PC-9 (cell line): ENCODE measurements at regions of chr2 and their contacts with region 1.

Region 1: DNA sequence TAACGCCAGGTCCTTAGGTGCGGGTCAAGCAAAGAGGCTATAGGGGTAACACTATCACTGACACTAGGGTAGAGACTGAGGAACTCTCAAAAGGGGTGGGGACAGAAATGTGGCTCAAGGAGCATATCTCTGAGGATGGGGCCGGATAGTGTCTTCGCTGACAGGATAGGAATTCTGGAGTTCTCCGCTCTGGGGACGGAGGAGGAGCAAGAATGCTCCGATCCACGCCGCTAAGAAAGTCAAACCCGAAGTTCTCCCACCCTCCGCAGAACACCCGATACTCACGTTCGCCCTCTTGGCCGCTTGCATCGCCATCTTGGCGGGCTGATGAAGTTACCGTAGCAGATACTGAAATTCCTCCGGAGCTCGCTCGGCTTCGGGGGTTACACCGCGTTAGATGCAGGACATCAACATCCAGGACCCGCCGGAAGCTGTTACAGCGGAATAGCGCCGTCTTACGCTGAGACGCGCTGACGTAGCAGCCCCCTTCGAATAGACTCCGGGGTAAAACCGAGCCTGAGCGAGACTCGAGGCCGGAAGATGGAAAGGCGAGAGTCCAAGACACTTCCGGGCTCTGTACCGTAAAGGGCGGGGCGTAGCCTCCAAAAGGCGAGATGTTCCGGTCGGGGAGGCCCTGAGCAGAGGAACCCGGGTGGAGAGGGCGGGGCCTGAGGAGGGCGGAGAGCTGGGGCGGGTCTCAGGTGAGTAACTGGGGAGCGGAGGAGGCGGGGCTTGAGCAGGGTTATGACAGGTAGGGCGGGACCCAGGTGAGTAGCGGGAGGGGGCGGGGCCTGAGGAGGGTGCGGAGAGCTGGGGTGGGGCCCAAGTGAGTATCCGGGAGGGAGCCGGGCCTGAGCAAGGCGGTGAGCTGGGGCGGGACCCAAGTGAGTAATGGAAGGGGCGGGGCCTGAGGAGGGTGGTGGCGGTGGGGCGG is at the start of gene SF3B6:
- DNase-seq: peak; percentile 99 to 100
- H3K4me3 ChIP-seq: peak within 1 kb of the TSS; percentile 89
- H3K27ac ChIP-seq: peak within 1 kb of the TSS; percentile 85
- H3K4me1 ChIP-seq: peaks cover 21% of the 10 kb centered on the region
- H3K27me3 ChIP-seq: no peaks in the 10 kb centered on the region
- CTCF ChIP-seq: no peak
- total RNA-seq, gene SF3B6: 106 and 123 TPM in 2 replicates

Region 2: GRCh38 chr2:23926750-23927571 is 149.2 kb before region 1 on chr2 and contains the start of gene ATAD2B:
- CTCF ChIA-PET with region 1: interaction called, 6 read pairs
- POLR2A ChIA-PET with region 1: interaction called, 9 read pairs
- intact Hi-C with region 1: loop called (anchors 2 kb)
- DNase-seq: peak; percentile 86 to 96
- H3K4me3 ChIP-seq: peak within 1 kb of the TSS; percentile 99
- H3K27ac ChIP-seq: peak within 1 kb of the TSS; percentile 76
- H3K4me1 ChIP-seq: peaks cover 30% of the 10 kb centered on the region
- H3K27me3 ChIP-seq: no peaks in the 10 kb centered on the region
- CTCF ChIP-seq: peak; percentile 79
- total RNA-seq, gene ATAD2B: 12.6 and 12.8 TPM in 2 replicates

Region 3: GRCh38 chr2:24046930-24047702 is 29.1 kb before region 1 on chr2 and contains the start of gene WDCP:
- CTCF ChIA-PET with region 1: interaction called, 5 read pairs
- POLR2A ChIA-PET with region 1: interaction called, 19 read pairs
- intact Hi-C with region 1: loop called (anchors 1 kb)
- DNase-seq: peak; percentile 91 to 99
- H3K4me3 ChIP-seq: peak within 1 kb of the TSS; percentile 73
- H3K27ac ChIP-seq: no peak within 1 kb of the TSS
- H3K4me1 ChIP-seq: peaks cover 17% of the 10 kb centered on the region; the same call in 1 of the 2 replicates
- H3K27me3 ChIP-seq: peaks cover 10% of the 10 kb centered on the region; the same call in 1 of the 2 replicates
- CTCF ChIP-seq: no peak
- total RNA-seq, gene WDCP: 7.9 and 13.5 TPM in 2 replicates

Region 4: DNA sequence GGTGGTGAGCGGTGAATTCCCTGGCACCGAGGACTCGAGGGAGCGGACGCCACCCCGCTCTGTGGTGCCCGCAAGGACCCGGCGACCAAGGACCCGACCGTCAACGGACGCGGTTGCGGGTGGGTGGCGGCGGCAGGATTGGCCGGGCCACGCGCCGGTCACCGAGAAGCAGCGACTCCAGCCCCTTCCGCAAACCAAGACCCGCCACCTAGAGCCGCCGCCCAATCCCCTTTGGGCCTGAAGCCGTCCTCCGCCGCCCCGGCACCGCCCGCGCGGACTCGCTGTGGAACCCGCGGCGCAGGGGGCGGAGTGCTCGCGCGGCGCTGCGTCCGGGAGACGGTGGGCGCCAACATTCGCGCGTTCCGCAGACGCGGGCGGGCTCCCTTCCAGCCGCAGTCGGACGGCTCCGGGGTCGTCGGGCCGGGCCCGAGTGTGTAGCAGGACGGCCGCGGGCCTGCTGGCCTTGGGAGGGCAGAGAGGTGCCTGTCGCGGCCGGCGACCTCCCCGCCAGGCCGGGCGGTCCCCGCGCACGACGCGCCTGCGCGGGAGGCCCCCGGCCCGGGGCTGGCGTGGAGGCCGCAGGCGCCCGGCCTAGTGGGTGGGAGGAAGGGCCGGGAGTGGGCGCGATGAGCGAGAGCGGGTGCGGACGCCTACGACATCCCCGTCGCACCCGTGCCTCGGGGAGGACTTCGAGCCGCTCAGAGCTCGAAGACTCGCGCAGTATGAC is 47.2 kb after region 1 on chr2 and contains the starts of genes FAM228B and PFN4:
- CTCF ChIA-PET with region 1: no interaction called
- POLR2A ChIA-PET with region 1: interaction called, 7 read pairs
- intact Hi-C with region 1: loop called (anchors 2 kb)
- DNase-seq: peak; percentile 62 to 85
- H3K4me3 ChIP-seq: peak within 1 kb of the TSS; percentile 89
- H3K27ac ChIP-seq: peak within 1 kb of the TSS; percentile 30
- H3K4me1 ChIP-seq: peaks cover 8% of the 10 kb centered on the region; the same call in 1 of the 2 replicates
- H3K27me3 ChIP-seq: no peaks in the 10 kb centered on the region
- CTCF ChIP-seq: no peak
- total RNA-seq, gene FAM228B: 16.8 and 20.7 TPM in 2 replicates
- total RNA-seq, gene PFN4: 1.2 and 2.6 TPM in 2 replicates

Region 5: DNA sequence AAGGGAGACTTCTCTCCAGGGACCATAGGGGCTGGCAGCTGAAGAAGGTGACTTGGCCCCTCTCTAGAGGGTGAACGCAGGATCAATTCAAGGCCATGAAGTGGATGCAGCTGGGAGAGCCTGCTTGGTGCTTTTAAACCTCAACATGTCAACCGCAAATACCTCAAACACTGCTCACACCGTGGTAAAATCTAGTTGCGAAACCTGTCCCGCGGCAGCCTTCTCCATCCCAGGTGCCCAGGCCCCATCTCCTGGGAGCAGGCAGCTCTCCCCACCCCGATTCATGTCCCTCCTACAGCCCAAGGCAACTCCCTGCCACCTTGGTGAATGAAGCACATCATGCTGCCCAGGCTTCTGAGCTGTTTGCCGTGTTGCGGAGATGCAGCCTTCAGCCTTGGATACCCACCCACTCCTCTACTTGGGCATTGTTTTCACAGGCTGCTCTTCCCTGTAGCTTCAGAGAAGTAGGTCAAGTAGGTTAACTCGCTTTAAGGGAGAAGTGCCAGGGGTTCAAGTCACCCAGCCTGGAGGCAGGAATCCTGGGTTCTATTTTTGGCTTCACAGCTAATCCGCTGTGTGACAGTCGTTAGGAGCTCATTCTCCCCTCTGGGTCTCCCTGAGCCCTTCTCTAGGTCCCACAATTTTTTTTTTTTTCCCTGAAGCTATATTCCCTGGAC is 959.5 kb after region 1 on chr2:
- CTCF ChIA-PET with region 1: no interaction called
- POLR2A ChIA-PET with region 1: interaction called, 12 read pairs
- intact Hi-C with region 1: no loop called
- DNase-seq: peak; percentile 78 to 93
- H3K4me3 ChIP-seq: no peak overlapping the region
- H3K27ac ChIP-seq: no peak overlapping the region
- H3K4me1 ChIP-seq: peaks cover 32% of the 10 kb centered on the region
- H3K27me3 ChIP-seq: peaks cover 6% of the 10 kb centered on the region; the same call in 1 of the 2 replicates
- CTCF ChIP-seq: no peak